ENCODE measurements at regions of chr1 and their contacts with region 1.

Region 1: DNA sequence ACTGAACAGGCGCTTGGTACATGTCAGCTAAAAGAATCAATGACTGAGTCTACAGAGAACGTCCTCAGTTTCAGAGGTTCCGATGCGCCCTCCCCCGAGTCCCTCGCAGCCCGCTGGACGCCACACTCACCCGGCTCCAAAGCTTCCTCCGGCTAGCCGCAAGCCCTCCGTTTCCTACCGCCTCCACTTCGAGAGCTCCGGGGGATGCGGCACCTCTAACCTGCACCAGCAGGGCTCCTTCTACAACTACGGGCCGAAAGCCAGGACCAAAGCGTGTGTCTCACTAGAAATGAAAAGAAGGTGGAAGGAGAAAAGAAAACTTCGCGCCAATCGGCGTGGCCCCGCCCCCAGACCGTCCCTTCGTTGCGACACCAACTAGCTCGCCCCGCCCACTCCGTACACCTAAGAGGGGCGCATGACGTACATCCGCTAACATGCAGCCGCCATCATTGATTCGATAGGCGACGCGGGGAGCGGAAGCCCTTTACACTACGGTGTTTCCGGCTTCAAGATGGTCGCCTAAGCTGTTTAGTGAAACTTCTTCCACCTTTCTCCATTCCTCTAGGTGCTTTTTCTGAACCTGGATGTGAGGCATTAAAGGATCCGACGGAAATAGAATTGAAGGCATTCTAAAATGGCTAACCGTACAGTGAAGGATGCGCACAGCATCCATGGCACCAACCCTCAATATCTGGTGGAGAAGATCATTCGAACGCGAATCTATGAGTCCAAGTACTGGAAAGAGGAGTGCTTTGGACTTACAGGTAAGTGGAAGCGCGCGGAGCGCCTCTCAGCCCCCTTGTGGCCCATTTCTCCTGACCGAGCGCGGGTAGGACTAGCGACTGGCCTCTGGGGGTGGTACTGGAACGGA is at the starts of genes ORC1 and PRPF38A:
- DNase-seq: peak; percentile 97

Region 2: GRCh38 chr1:52697795-52698674 is 293.7 kb after region 1 on chr1 and contains the start of gene COA7:
- in situ Hi-C with region 1: loop called (anchors 25 kb)
- DNase-seq: peak; percentile 79